ENCODE measurements at regions of chr17 and their contacts with region 1.

Region 1: GRCh38 chr17:7989781-7990655 is 12.4 kb upstream of the GUCY2D start:
- DNase-seq: peak; percentile 93
- ATAC-seq: peak; percentile 95
- H3K4me3 ChIP-seq: peak overlapping the region; percentile 59
- H3K27ac ChIP-seq: peak overlapping the region; percentile 78
- H3K4me1 ChIP-seq: peaks cover 6% of the 10 kb centered on the region
- H3K27me3 ChIP-seq: peaks cover 10% of the 10 kb centered on the region
- CTCF ChIP-seq: peak; percentile 95

Region 2: GRCh38 chr17:7252176-7253043 is 737.6 kb before region 1 on chr17 and contains the start of gene ELP5:
- intact Hi-C with region 1: no loop called
- DNase-seq: peak; percentile 97
- ATAC-seq: peak; percentile 82
- H3K4me3 ChIP-seq: peak within 1 kb of the TSS; percentile 91
- H3K27ac ChIP-seq: peak within 1 kb of the TSS; percentile 99
- H3K4me1 ChIP-seq: peaks cover 32% of the 10 kb centered on the region
- H3K27me3 ChIP-seq: no peaks in the 10 kb centered on the region
- CTCF ChIP-seq: peak; percentile 34
- total RNA-seq, gene ELP5: 35.0 TPM

Region 3: DNA sequence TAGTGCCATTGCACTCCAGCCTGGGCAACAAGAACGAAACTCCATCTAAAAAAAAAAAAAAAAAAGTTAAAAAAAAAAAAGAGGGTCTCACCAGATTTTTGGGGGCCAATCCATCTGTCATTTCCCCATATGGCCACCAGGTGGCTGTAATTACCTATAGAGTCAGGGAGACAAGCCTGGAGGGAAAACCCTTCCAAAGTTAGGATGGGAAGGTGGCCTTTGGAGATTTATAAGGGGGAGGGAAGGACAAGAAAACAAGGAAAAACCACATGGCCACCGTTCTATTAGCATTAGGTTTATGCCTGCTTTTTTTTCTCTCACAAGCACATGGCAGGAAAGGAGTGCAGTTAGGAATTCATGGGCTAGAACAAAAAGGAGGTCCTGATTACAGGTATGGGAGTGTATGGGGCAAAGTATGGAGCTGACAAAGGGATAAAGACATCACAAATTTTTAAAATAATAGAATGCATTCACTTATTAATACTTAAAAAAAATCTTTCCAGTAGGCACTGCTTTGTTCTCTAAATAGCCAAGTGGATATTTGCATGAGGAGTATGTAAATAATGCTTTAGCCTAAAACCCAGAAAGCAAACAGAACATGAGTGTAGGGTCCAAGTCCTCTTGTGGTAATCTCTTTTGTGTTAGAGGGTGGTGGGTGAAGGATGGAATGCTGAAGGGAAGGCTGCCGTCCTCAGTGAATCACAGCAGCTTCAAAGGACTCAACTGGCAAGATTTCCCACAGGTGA is 127.2 kb before region 1 on chr17:
- intact Hi-C with region 1: loop called (anchors 5 kb)
- DNase-seq: no peak
- ATAC-seq: no peak
- H3K4me3 ChIP-seq: no peak overlapping the region
- H3K27ac ChIP-seq: no peak overlapping the region
- H3K4me1 ChIP-seq: peaks cover 22% of the 10 kb centered on the region
- H3K27me3 ChIP-seq: no peaks in the 10 kb centered on the region
- CTCF ChIP-seq: peak; percentile 85

Region 4: DNA sequence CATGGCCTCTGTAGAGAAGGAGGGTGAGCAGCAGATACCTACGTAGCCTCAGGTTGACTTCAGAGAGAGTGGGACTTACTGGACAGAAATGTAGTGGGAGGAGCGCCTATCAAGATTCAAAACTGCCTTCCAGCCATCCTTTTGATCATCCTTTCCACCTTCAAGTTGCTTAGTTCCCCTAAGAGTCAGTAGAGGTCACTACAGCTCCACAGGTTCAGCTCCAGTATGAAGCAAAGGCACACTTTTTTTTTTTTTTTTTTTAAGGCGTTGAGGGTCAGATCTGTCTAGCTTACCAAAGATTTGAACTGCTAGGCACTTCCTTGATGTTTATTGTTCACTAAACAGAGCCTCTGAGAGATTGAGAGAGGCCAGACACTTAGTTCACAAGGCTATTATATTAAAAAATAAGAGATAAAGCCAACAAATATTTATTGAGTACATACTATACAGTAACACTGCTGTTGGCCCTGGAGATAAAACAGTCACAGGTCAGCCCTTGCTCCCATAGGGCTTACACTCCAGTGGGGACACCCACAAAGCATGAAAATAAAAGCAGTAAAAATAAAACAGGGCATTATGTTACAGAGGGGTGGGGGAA is 77.0 kb before region 1 on chr17:
- intact Hi-C with region 1: loop called (anchors 5 kb)
- DNase-seq: no peak
- ATAC-seq: peak; percentile 25
- H3K4me3 ChIP-seq: no peak overlapping the region
- H3K27ac ChIP-seq: no peak overlapping the region
- H3K4me1 ChIP-seq: peaks cover 22% of the 10 kb centered on the region
- H3K27me3 ChIP-seq: no peaks in the 10 kb centered on the region
- CTCF ChIP-seq: peak; percentile 69

Measured in upper lobe of right lung (tissue), 1 donor.